Heart right ventricle (tissue), 16 donors: ENCODE measurements at regions of chr2 and their contacts with region 1.

Region 1: DNA sequence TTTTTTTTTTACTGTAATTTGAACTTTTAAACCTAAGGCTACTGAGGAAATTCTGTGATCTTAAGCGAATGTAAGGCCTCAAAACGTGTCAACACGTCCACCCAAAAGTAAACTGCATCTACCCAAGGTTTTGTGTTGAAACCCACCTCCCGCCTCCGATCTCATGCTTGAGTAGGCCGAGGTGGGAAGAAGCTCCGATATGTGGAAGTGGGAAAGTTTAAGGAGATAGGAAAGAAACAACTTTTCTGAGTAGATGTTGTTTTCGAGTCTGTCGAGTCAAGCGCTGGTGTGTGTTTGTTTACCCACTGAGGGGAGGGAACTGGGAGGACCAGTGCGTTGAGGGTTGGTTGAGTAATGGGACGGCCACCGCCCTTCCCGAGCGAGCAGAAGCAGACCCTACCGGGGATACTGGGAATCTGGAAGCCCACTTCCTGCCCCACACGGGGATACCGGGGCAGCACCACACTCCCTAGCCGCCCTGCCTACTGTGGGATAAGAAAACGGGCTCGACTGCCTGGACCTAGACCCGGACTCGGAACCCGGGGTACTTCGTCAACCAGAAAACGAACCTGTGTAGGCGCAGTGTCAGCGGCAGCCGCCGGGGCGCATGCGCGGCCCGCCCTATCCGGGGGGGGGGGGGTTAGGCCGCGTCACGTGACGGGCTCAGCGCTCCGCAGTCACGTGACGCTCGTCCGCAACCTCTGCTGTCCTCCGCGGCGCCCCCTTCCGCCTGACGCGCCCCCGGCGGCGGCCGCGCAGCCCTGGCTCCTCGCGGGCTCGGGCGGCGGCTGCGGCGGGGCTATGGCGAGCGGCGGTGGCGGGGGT is at the start of gene RETREG2:
- DNase-seq: peak; percentile 86 to 89
- ATAC-seq: peak; percentile 77 to 93 (median 84)
- H3K4me3 ChIP-seq: peak within 1 kb of the TSS; percentile 42 to 97 (median 92)
- H3K27ac ChIP-seq: peak within 1 kb of the TSS; percentile 89 to 100 (median 99)
- H3K4me1 ChIP-seq: peaks cover 11 to 58% (median 37%) of the 10 kb centered on the region in 9 donors
- H3K27me3 ChIP-seq: no peaks in the 10 kb centered on the region
- CTCF ChIP-seq: peak in 6 of 9 donors; percentile 25 to 70 (median 38)
- total RNA-seq, gene RETREG2: 24.1 to 47.3 (median 30.6) TPM

Region 2: GRCh38 chr2:219160186-219161017 is 17.4 kb before region 1 on chr2 and contains the start of gene NHEJ1:
- intact Hi-C with region 1: loop called in 3 of 10 experiments (anchors 2 kb)
- DNase-seq: peak; percentile 97 to 98
- ATAC-seq: peak; percentile 96 to 98 (median 97)
- H3K4me3 ChIP-seq: peak within 1 kb of the TSS; percentile 40 to 74 (median 62)
- H3K27ac ChIP-seq: peak within 1 kb of the TSS; percentile 80 to 94 (median 92)
- H3K4me1 ChIP-seq: peaks cover 0 to 19% (median 11%) of the 10 kb centered on the region in 9 donors
- H3K27me3 ChIP-seq: no peaks in the 10 kb centered on the region
- CTCF ChIP-seq: peak; percentile 99 to 100 (median 99)
- total RNA-seq, gene NHEJ1: 4.7 to 12.0 (median 7.1) TPM

Region 3: GRCh38 chr2:219218732-219219701 is 41.3 kb after region 1 on chr2 and contains the start of gene ABCB6:
- intact Hi-C with region 1: loop called in 3 of 10 experiments (anchors 1 to 5 kb)
- DNase-seq: peak; percentile 97 to 98
- ATAC-seq: peak; percentile 90 to 93 (median 92)
- H3K4me3 ChIP-seq: peak within 1 kb of the TSS; percentile 30 to 75 (median 64)
- H3K27ac ChIP-seq: peak within 1 kb of the TSS; percentile 72 to 95 (median 90)
- H3K4me1 ChIP-seq: peaks cover 12 to 40% (median 34%) of the 10 kb centered on the region in 9 donors
- H3K27me3 ChIP-seq: no peaks in the 10 kb centered on the region
- CTCF ChIP-seq: no peak
- total RNA-seq, gene ABCB6: 9.8 to 31.0 (median 14.8) TPM

Region 4: GRCh38 chr2:219278655-219279516 is 101.1 kb after region 1 on chr2 and contains the start of gene DNAJB2:
- intact Hi-C with region 1: loop called in 1 of 10 experiments (anchors 2 kb)
- DNase-seq: peak; percentile 99
- ATAC-seq: peak; percentile 95 to 97 (median 97)
- H3K4me3 ChIP-seq: peak within 1 kb of the TSS; percentile 56 to 96 (median 75)
- H3K27ac ChIP-seq: peak within 1 kb of the TSS; percentile 91 to 100 (median 98)
- H3K4me1 ChIP-seq: peaks cover 11 to 62% (median 36%) of the 10 kb centered on the region in 9 donors
- H3K27me3 ChIP-seq: no peaks in the 10 kb centered on the region
- CTCF ChIP-seq: no peak
- total RNA-seq, gene DNAJB2: 55.6 to 87.6 (median 83.1) TPM

Region 5: GRCh38 chr2:219362524-219363164 is 184.9 kb after region 1 on chr2:
- intact Hi-C with region 1: loop called in 1 of 10 experiments (anchors 10 kb)
- DNase-seq: peak; percentile 50 to 58
- ATAC-seq: peak; percentile 61 to 90 (median 74)
- H3K4me3 ChIP-seq: no peak overlapping the region
- H3K27ac ChIP-seq: no peak overlapping the region
- H3K4me1 ChIP-seq: peaks cover 0 to 24% (median 11%) of the 10 kb centered on the region in 9 donors
- H3K27me3 ChIP-seq: peaks cover 9 to 26% (median 19%) of the 10 kb centered on the region in 7 donors
- CTCF ChIP-seq: no peak